Activated T-helper 1 cell treated with anti-CD3 and anti-CD28 coated beads, Interleukin-12 subunit alpha, Interleukin-12 subunit beta, Interleukin-2, Interleukin-4 antibody, amounts not matched to agents 30 ng/mL and 10 ng/mL and 1 ng/mL, durations not matched to agents 14 hours and 24 hours and 36 hours (primary cell): ENCODE measurements at regions of chr7 and their contacts with region 1.

Region 1: DNA sequence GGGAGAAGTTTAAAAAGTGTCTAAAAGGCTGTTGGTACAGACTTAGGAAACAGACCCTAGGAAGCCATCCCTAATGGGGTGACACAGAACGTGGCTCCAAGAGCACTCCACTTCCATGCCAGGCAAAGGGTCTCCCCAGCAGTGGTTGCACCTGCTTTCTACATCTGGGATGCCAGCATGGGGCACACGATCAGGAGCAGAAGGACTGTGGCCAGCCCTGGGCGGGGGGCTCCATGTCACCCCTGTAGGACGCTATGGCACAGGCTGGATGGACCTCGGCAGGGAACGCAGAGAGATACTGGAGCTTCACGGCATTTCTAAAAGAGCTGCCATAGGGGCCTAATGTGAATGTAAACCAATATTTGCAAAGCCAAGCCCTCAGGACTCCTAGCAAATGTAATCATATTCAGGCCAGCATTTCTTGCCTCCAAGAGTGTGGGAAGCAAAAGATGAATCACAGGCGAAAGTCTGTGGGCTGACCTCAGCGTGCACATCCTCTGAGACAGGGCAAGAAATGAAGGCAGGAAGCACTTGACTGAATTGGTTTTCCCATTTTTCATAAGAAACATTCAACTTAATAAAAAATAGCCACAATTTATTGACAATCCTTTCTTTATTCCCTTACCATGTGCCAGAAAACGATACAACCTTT is 93.9 kb downstream of the ATXN7L1 start:
- DNase-seq: no peak
- H3K4me3 Mint-ChIP-seq: no peak overlapping the region
- H3K27ac Mint-ChIP-seq: no peak overlapping the region
- H3K4me1 Mint-ChIP-seq: peaks cover 11% of the 10 kb centered on the region
- H3K27me3 Mint-ChIP-seq: peaks cover 47% of the 10 kb centered on the region

Region 2: GRCh38 chr7:105638902-105639495 is 143.5 kb before region 1 on chr7:
- intact Hi-C with region 1: no loop called
- DNase-seq: no peak
- H3K4me3 Mint-ChIP-seq: no peak overlapping the region
- H3K27ac Mint-ChIP-seq: no peak overlapping the region
- H3K4me1 Mint-ChIP-seq: no peaks in the 10 kb centered on the region
- H3K27me3 Mint-ChIP-seq: no peaks in the 10 kb centered on the region

Region 3: DNA sequence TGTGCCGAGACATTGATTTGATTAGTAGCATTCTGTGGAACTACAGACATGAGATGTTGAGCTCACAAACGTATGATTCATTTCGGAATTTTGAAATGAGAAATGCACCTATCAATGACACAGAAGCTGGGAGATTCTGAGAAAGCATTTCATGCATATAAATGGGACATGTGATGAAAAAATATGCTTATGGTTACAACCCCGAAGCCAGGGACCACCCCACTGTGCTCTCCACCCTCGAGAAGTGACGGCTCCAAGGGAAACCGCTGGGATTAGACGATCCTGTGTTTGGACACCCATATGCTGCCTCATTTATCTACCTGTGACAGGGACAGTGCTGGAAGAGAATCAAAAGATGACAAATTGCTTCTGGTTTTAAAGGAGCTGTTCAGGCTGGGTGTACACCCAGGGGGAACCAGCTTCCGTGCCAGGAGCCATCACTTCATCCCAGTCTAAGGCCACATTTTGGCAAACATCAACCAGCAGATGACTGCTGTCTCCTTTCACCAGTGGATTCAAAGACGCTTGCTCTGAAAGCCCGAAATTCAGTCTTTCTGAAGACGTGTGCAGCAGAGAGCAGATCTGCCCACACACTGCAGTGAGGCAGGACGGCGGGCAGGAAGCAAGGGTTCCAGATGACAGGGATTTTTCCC is 16.0 kb before region 1 on chr7:
- intact Hi-C with region 1: loop called (anchors 2 kb)
- DNase-seq: no peak
- H3K4me3 Mint-ChIP-seq: no peak overlapping the region
- H3K27ac Mint-ChIP-seq: no peak overlapping the region
- H3K4me1 Mint-ChIP-seq: peaks cover 24% of the 10 kb centered on the region
- H3K27me3 Mint-ChIP-seq: peaks cover 22% of the 10 kb centered on the region

Region 4: GRCh38 chr7:105800442-105800841 is 17.9 kb after region 1 on chr7:
- intact Hi-C with region 1: loop called (anchors 1 kb)
- DNase-seq: no peak
- H3K4me3 Mint-ChIP-seq: peak overlapping the region; percentile 62
- H3K27ac Mint-ChIP-seq: peak overlapping the region; percentile 15
- H3K4me1 Mint-ChIP-seq: peaks cover 44% of the 10 kb centered on the region
- H3K27me3 Mint-ChIP-seq: peaks cover 5% of the 10 kb centered on the region